ENCODE measurements at regions of chr18 and their contacts with region 1.

Region 1: GRCh38 chr18:74906184-74906583 is 302.8 kb downstream of the PTGR3 start:
- DNase-seq: no peak
- H3K4me3 ChIP-seq: no peak overlapping the region
- H3K27ac ChIP-seq: no peak overlapping the region
- H3K4me1 ChIP-seq: peaks cover 0 to 10% of the 10 kb centered on the region in 2 donors
- H3K27me3 ChIP-seq: no peaks in the 10 kb centered on the region
- CTCF ChIP-seq: no peak
- POLR2A ChIP-seq: no peak

Region 2: DNA sequence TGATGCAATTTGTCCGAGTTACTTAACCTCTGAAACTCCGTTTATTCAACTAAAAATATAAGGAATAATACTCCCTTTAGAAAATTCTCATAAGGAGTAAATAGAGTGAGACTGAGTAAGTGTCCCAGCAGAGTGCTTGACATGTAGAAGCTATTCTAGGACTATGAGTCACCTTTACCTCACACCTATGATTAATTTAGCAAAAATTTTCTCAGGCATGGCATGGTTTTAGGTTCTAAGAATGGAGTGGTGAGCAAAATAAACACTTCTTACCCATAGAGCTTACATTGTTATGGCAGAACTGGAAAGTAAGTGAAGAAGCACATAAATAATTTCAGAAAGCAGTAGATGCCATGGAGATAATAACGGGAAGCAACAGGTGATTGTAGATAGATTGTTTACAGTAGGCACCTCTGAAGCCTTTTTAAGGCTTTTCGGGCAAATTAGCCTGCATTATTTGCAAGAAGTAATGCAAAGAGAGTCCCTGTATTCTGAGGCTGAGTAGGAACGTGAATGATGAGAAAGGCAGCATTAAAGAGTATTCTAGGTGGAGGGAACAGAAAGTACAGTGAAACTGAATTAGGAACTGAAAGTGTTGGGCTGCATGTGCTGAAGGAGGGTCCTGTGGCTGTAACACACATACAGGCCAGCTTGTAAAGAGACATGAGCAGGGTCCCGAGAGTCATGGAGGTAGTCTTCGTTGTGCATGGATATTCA is 99.3 kb before region 1 on chr18:
- intact Hi-C with region 1: no loop called
- DNase-seq: no peak
- H3K4me3 ChIP-seq: no peak overlapping the region
- H3K27ac ChIP-seq: peak overlapping the region in 1 of 3 donors; percentile 15
- H3K4me1 ChIP-seq: peaks cover 0 to 15% of the 10 kb centered on the region in 2 donors
- H3K27me3 ChIP-seq: no peaks in the 10 kb centered on the region
- CTCF ChIP-seq: no peak
- POLR2A ChIP-seq: no peak

Region 3: DNA sequence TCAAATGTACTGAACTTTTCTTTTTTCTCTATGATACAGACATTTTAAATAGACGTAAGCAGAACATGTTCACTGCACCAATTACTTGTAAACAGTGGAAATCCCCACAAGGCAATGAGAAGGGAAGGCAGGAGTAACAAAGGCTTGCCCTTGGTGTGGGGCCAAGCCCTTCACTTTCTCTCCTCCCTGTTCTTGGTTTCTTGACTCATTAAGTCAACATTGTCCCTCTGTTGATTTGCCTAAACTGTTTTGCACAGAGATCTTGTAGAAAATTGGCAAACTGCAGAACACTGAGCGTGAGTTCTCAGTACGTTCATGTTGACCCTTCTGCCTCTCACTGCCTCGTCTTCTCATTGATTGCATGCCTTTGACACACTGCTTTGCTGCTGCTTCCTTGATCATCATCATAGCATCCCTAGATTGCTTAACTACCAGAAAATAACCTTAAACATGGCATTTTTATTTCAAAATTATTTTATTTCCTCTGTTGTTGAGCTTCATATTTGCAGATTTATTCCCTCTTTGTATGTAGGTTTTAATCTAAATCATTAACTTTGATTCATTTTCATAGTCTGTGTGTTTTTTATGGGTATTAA is 45.1 kb after region 1 on chr18:
- intact Hi-C with region 1: loop called (anchors 10 kb)
- DNase-seq: peak; percentile 86 to 92
- H3K4me3 ChIP-seq: no peak overlapping the region
- H3K27ac ChIP-seq: peak overlapping the region; percentile 52 to 95 (median 65)
- H3K4me1 ChIP-seq: peaks cover 18 to 27% of the 10 kb centered on the region in 2 donors
- H3K27me3 ChIP-seq: no peaks in the 10 kb centered on the region
- CTCF ChIP-seq: no peak
- POLR2A ChIP-seq: no peak

Region 4: DNA sequence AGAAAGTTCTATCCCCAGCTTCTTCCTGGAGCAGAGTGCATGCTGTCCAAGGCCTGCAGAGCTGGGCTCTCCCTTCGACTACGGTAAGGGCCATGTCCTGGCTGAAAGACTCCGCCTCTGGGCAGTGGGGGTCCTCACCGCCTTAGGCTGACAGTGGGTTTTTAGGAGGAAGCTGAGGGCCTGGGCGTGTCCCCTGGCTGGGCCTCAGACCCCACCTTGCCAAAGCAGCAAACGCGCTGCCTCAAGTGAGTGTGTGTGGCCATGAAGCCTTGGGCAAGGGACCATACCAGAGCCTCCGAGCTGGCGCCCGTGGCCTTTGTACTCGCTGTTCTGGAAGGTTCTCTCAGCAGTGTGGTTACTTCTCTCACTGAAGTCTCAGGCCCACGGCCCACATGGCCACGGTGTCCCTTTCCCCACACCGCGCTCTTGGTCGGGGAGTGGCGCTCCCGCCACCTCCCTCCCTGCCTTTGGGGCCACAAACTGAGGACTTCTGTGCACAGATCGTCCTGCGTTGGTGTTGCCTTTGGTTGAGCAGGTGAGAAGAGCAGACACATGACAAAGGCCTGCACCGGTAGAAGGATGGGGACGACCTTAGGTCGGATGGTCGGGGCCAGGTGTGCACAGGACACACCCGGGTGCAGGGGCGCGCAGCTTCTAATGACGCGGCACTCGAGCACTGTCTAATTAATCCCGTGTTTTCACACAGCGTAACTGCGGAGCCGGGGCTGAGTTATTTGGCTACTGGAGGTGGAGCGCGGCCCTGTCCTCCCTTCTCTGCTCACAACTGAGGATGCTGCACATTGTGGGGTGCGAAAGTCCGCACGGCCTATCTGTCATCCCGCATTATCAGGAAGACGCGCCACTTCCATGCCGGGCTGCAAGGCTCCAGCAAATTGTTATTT is 181.2 kb after region 1 on chr18:
- intact Hi-C with region 1: no loop called
- DNase-seq: no peak
- H3K4me3 ChIP-seq: no peak overlapping the region
- H3K27ac ChIP-seq: no peak overlapping the region
- H3K4me1 ChIP-seq: no peaks in the 10 kb centered on the region
- H3K27me3 ChIP-seq: no peaks in the 10 kb centered on the region
- CTCF ChIP-seq: no peak
- POLR2A ChIP-seq: no peak

Region 5: GRCh38 chr18:75183531-75183930 is 277.3 kb after region 1 on chr18:
- intact Hi-C with region 1: no loop called
- DNase-seq: peak; percentile 25 to 32
- H3K4me3 ChIP-seq: no peak overlapping the region
- H3K27ac ChIP-seq: no peak overlapping the region
- H3K4me1 ChIP-seq: peaks cover 4 to 12% of the 10 kb centered on the region in 2 donors
- H3K27me3 ChIP-seq: no peaks in the 10 kb centered on the region
- CTCF ChIP-seq: no peak
- POLR2A ChIP-seq: no peak

Measured in thyroid gland (tissue), 4 donors.